CD8-positive, alpha-beta T cell (primary cell): ENCODE measurements at regions of chr7 and their contacts with region 1.

Region 1: GRCh38 chr7:99270683-99271082 is 2.0 kb upstream of the MYH16 start:
- DNase-seq: no peak
- ATAC-seq: no peak
- H3K4me3 ChIP-seq: no peak overlapping the region
- H3K4me3 Mint-ChIP-seq: no peak overlapping the region
- H3K27ac ChIP-seq: no peak overlapping the region
- H3K27ac Mint-ChIP-seq: no peak overlapping the region
- H3K4me1 ChIP-seq: no peaks in the 10 kb centered on the region
- H3K4me1 Mint-ChIP-seq: no peaks in the 10 kb centered on the region
- H3K27me3 ChIP-seq: no peaks in the 10 kb centered on the region
- H3K27me3 Mint-ChIP-seq: peaks cover 2% of the 10 kb centered on the region
- CTCF ChIP-seq: no peak

Region 2: DNA sequence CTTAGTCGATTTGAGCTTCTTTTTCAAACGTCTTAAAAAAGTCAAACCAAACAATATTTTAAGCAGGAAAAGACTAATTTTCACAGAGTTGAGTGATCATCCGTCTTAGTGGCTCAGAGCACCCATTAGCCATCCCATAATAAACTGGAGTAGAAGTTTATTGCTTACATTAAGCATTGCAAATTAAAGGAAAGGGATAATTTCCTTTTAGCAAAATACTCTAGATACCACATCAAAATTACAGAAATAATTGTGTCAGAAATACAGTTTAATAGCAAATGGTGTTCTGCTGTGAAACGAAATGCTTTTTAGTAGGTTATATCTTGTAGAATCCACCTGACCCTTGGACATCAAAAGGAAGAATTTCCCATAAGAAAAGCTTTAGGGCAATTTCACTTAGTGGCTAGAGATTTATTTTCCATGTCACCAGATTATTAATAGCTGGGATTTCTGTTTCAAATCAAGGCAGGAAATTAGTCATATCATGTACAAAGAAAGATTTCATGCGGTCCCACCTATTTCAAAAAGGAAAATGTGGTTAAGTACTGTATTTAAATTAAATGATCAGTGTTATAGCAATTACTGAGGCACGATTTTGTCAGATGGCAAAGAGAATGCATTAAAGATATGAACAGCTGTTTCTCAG is 557.4 kb before region 1 on chr7:
- CTCF ChIA-PET with region 1: no interaction called
- POLR2A ChIA-PET with region 1: no interaction called
- intact Hi-C with region 1: no loop called
- DNase-seq: no peak
- ATAC-seq: no peak
- H3K4me3 ChIP-seq: no peak overlapping the region
- H3K4me3 Mint-ChIP-seq: no peak overlapping the region
- H3K27ac ChIP-seq: no peak overlapping the region
- H3K27ac Mint-ChIP-seq: no peak overlapping the region
- H3K4me1 ChIP-seq: no peaks in the 10 kb centered on the region
- H3K4me1 Mint-ChIP-seq: no peaks in the 10 kb centered on the region
- H3K27me3 ChIP-seq: no peaks in the 10 kb centered on the region
- H3K27me3 Mint-ChIP-seq: peaks cover 3% of the 10 kb centered on the region
- CTCF ChIP-seq: no peak

Region 3: DNA sequence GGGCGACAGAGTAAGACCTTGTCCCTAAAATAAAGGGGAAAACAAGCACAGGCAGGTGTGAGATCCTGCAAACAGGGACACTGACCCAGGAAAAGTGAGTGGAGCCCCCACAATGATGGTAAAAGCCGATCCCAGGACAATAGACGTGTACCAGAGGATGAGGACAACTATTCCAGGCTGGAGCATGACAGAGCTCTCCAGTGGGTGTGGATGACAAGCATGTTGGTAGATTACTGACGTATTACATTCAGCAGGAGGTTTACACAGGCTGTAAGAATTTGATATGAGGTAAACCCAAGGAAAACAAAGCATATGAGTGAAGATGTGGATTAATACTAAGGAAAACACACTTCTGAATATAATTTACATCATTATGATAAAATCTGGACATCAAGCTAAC is 99.0 kb before region 1 on chr7:
- CTCF ChIA-PET with region 1: no interaction called
- POLR2A ChIA-PET with region 1: no interaction called
- intact Hi-C with region 1: loop called in 1 of 2 experiments (anchors 10 kb)
- DNase-seq: no peak
- ATAC-seq: no peak
- H3K4me3 ChIP-seq: no peak overlapping the region
- H3K4me3 Mint-ChIP-seq: no peak overlapping the region
- H3K27ac ChIP-seq: no peak overlapping the region
- H3K27ac Mint-ChIP-seq: no peak overlapping the region
- H3K4me1 ChIP-seq: no peaks in the 10 kb centered on the region
- H3K4me1 Mint-ChIP-seq: no peaks in the 10 kb centered on the region
- H3K27me3 ChIP-seq: no peaks in the 10 kb centered on the region
- H3K27me3 Mint-ChIP-seq: peaks cover 18% of the 10 kb centered on the region
- CTCF ChIP-seq: no peak

Region 4: GRCh38 chr7:99244939-99245338 is 25.7 kb before region 1 on chr7:
- CTCF ChIA-PET with region 1: no interaction called
- POLR2A ChIA-PET with region 1: no interaction called
- intact Hi-C with region 1: no loop called
- DNase-seq: no peak
- ATAC-seq: no peak
- H3K4me3 ChIP-seq: no peak overlapping the region
- H3K4me3 Mint-ChIP-seq: no peak overlapping the region
- H3K27ac ChIP-seq: no peak overlapping the region
- H3K27ac Mint-ChIP-seq: no peak overlapping the region
- H3K4me1 ChIP-seq: no peaks in the 10 kb centered on the region
- H3K4me1 Mint-ChIP-seq: no peaks in the 10 kb centered on the region
- H3K27me3 ChIP-seq: peaks cover 0 to 3% of the 10 kb centered on the region in 2 experiments
- H3K27me3 Mint-ChIP-seq: peaks cover 19% of the 10 kb centered on the region
- CTCF ChIP-seq: no peak

Region 5: DNA sequence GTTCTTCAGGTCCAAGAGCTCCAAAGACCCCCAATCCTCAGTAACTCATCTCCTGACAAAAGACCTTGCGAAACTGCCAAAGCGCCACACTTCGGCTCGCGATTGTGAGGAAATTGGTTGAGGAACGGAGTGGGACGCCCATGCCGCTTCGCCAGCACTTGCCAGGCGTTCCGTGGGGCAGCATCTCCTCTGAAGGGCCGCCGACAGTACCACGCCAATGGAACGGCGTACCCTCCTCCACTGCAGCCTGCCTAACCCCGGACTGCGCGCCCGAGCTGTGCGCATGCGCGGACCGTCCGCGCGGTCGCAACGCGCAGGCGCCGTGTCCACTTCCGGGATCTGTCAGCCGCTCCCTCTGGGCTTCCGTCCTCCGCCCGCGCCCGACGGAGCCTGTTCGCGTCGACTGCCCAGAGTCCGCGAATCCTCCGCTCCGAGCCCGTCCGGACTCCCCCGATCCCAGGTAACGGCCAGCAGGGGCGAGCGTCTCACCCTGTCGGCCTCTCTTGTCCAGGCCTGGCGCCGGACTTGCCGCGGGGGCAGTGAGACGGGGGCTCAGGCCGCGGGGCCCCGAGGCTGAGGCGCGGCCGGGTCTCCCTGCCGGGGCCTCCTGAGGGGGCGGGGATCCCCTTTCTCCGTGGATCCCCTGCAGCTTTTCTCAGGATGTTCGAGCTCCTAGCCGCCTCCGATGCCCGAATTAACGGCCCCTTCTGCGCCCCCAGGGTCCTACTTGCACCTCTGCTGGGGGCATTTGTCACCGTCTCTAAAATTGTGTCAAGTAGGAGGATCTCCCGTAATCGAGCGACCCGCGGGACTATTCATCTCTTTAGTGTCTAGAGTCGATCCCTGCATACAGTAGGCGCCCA is 55.1 kb after region 1 on chr7 and contains the start of gene ARPC1A:
- CTCF ChIA-PET with region 1: no interaction called
- POLR2A ChIA-PET with region 1: no interaction called
- intact Hi-C with region 1: no loop called
- DNase-seq: peak; percentile 88 to 96 (median 92)
- ATAC-seq: peak; percentile 92
- H3K4me3 ChIP-seq: peak within 1 kb of the TSS; percentile 97 to 100
- H3K4me3 Mint-ChIP-seq: peak within 1 kb of the TSS; percentile 89
- H3K27ac ChIP-seq: peak within 1 kb of the TSS; percentile 79 to 87
- H3K27ac Mint-ChIP-seq: peak within 1 kb of the TSS; percentile 94
- H3K4me1 ChIP-seq: peaks cover 45% of the 10 kb centered on the region
- H3K4me1 Mint-ChIP-seq: peaks cover 43% of the 10 kb centered on the region
- H3K27me3 ChIP-seq: no peaks in the 10 kb centered on the region
- H3K27me3 Mint-ChIP-seq: no peaks in the 10 kb centered on the region
- CTCF ChIP-seq: no peak
- total RNA-seq, gene ARPC1A: 33.1 to 38.2 TPM